ENCODE measurements at regions of chr6 and their contacts with region 1.

Region 1: DNA sequence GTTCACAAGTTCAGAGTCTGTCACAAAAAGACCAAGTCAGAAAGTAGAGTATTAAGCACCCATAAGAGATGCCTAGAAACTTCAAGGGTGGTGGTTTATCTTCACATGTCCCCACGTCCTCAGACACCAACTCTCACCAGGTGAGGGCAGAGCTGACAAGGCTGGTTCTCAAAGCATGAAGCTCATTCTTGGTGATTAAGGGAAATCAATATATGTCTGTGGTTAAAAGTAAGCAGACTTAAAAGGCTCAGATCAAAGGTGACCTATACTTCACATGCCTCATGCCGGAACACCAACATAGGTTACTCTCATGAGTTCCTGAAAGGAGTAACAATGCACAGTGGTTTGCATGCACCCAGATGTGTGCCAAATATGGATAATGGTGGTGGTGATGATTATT is 27.0 kb downstream of the IL17A start:
- DNase-seq: peak; percentile 68
- H3K4me3 Mint-ChIP-seq: no peak overlapping the region
- H3K27ac Mint-ChIP-seq: no peak overlapping the region
- H3K4me1 Mint-ChIP-seq: peaks cover 11% of the 10 kb centered on the region
- H3K27me3 Mint-ChIP-seq: peaks cover 8% of the 10 kb centered on the region

Region 2: GRCh38 chr6:50602292-50602691 is 1610.8 kb before region 1 on chr6:
- CTCF ChIA-PET with region 1: no interaction called
- intact Hi-C with region 1: no loop called
- DNase-seq: no peak
- H3K4me3 Mint-ChIP-seq: no peak overlapping the region
- H3K27ac Mint-ChIP-seq: no peak overlapping the region
- H3K4me1 Mint-ChIP-seq: no peaks in the 10 kb centered on the region
- H3K27me3 Mint-ChIP-seq: no peaks in the 10 kb centered on the region

Region 3: GRCh38 chr6:52155791-52156576 is 57.1 kb before region 1 on chr6:
- CTCF ChIA-PET with region 1: no interaction called
- intact Hi-C with region 1: no loop called
- DNase-seq: no peak
- H3K4me3 Mint-ChIP-seq: no peak overlapping the region
- H3K27ac Mint-ChIP-seq: no peak overlapping the region
- H3K4me1 Mint-ChIP-seq: peaks cover 39% of the 10 kb centered on the region
- H3K27me3 Mint-ChIP-seq: peaks cover 27% of the 10 kb centered on the region

Region 4: DNA sequence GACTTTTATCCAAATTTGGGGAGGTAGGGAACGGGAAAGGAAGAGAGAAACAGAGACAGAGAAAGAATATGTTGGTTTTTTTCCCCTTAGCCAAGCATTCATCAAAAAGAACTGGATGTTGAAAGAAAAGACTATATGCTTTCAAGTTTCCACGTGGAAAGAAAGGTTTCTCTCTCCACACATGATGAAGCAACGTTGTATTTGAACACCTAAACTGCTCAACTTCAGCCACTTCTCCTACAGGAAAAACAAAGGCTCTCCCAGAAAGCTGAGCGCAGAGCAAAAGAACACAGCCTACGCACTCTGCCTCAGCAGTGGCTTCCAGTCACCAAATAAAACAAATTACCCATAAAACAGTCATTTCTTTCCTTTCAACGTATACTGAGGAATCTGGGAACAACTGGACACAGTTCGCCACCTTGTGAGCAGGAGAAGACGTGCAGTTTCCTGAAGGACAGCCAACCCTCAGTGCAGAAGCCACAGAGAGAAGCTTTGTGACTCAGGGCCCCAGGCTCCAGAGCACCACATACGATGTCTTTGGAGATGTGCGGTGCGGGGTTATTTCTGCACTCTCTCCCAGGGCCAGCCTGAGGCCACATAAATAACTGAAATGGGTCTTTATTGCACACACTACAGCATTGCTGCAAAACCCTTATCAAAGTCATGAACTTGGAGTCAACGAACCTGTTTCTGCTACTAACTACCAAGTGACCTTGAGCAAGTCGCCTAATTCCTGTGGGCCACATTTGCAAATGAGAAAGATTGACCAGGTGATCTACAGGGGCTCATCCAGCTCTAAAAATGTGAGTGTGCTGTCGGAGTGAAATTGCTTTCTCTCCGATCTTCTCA is 21.1 kb after region 1 on chr6:
- CTCF ChIA-PET with region 1: interaction called, 7 read pairs
- intact Hi-C with region 1: loop called (anchors 1 kb)
- DNase-seq: peak; percentile 62
- H3K4me3 Mint-ChIP-seq: no peak overlapping the region
- H3K27ac Mint-ChIP-seq: no peak overlapping the region
- H3K4me1 Mint-ChIP-seq: peaks cover 6% of the 10 kb centered on the region
- H3K27me3 Mint-ChIP-seq: peaks cover 23% of the 10 kb centered on the region

Region 5: DNA sequence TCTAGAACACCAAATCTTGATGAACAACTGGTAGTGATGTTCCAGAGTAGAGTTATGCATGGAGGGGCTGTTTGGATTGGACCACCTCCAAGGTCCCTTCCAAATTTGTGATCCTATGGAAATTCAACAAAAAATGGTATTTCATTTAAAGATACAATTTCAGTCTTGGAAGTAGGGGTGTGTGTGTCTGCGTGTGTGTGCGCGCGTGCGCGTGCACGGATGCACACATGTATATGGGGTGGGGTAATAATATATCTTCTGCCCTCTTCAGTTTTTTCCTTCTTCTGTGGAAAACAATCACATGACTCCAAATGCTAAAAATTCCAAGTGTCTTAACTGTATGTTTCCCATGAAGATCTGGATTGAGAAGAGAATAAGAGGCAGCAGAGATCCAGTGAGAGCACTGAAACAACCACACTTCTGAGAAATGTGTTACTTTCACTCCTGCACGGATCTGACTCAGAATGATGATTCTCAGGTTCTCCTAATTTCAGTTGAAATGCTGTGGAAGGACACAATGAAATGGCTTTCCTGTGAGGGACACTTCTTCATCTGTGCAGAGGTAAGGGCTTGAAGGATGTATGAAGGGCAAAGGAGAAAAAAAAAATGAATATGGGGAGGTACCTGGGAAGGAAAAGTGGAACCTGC is 41.7 kb after region 1 on chr6:
- CTCF ChIA-PET with region 1: interaction called, 5 read pairs
- intact Hi-C with region 1: loop called (anchors 2 kb)
- DNase-seq: peak; percentile 37
- H3K4me3 Mint-ChIP-seq: no peak overlapping the region
- H3K27ac Mint-ChIP-seq: no peak overlapping the region
- H3K4me1 Mint-ChIP-seq: peaks cover 43% of the 10 kb centered on the region
- H3K27me3 Mint-ChIP-seq: peaks cover 10% of the 10 kb centered on the region